Activated naive CD4-positive, alpha-beta T cell treated with anti-CD3 and anti-CD28 coated beads for 36 hours (primary cell): ENCODE measurements at regions of chr19 and their contacts with region 1.

Region 1: GRCh38 chr19:41945135-41945766 is 13.9 kb downstream of the RABAC1 start:
- DNase-seq: peak; percentile 98
- H3K4me3 Mint-ChIP-seq: peak overlapping the region; percentile 48
- H3K27ac Mint-ChIP-seq: peak overlapping the region; percentile 93
- H3K4me1 Mint-ChIP-seq: peaks cover 42% of the 10 kb centered on the region
- H3K27me3 Mint-ChIP-seq: no peaks in the 10 kb centered on the region

Region 2: DNA sequence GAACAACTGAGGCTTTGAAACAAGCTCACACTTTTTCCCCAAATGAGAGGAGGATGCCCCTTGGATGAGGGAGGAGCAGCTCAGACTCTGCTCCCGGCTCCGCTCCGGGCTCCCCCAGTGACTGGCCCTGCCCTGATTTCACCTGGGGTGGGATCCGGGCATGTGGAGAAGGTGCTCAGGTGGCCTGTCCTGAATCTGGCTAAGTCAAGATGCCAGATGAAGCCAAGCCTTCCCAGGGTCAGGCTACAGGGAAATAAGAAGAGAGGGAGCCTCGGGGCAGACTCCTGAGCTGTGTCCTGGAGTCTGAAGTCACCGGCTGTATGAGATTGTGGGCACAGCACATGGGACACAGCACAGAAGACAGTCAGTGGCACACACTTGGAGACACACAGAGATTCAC is 226.5 kb before region 1 on chr19:
- CTCF ChIA-PET with region 1: no interaction called
- intact Hi-C with region 1: no loop called
- DNase-seq: no peak
- H3K4me3 Mint-ChIP-seq: no peak overlapping the region
- H3K27ac Mint-ChIP-seq: no peak overlapping the region
- H3K4me1 Mint-ChIP-seq: no peaks in the 10 kb centered on the region
- H3K27me3 Mint-ChIP-seq: peaks cover 21% of the 10 kb centered on the region

Region 3: DNA sequence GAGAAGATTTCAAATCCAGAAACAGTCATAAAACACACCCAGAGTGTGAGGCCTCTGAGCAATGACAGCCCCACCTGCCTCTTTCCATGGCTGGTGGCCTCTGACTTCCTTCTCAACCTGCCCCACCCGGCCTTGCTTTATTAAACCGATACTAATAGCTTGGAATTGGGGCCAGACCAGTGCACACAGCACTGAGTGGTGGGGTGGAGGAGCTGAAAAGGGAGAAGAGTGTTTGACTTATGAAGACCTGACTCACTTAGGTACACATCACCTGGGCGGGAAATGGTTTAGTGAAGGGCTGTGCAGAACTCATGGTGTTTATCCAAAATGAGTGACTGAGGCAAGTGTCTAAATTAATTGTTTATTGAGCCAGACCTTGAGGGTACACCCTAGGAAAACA is 210.6 kb before region 1 on chr19:
- CTCF ChIA-PET with region 1: no interaction called
- intact Hi-C with region 1: no loop called
- DNase-seq: no peak
- H3K4me3 Mint-ChIP-seq: no peak overlapping the region
- H3K27ac Mint-ChIP-seq: no peak overlapping the region
- H3K4me1 Mint-ChIP-seq: peaks cover 6% of the 10 kb centered on the region
- H3K27me3 Mint-ChIP-seq: peaks cover 27% of the 10 kb centered on the region

Region 4: GRCh38 chr19:41928221-41928683 is 17.0 kb before region 1 on chr19 and contains the start of gene ERFL:
- CTCF ChIA-PET with region 1: interaction called, 5 read pairs
- intact Hi-C with region 1: loop called (anchors 2 kb)
- DNase-seq: peak; percentile 40
- H3K4me3 Mint-ChIP-seq: peak within 1 kb of the TSS; percentile 77
- H3K27ac Mint-ChIP-seq: peak within 1 kb of the TSS; percentile 40
- H3K4me1 Mint-ChIP-seq: peaks cover 21% of the 10 kb centered on the region
- H3K27me3 Mint-ChIP-seq: no peaks in the 10 kb centered on the region
- total RNA-seq, gene ERFL: 0.99 to 1.3 TPM

Region 5: GRCh38 chr19:41959056-41960053 is 14.1 kb after region 1 on chr19 and contains the start of gene RABAC1:
- CTCF ChIA-PET with region 1: interaction called, 6 read pairs
- intact Hi-C with region 1: loop called (anchors 1 kb)
- DNase-seq: peak; percentile 95
- H3K4me3 Mint-ChIP-seq: peak within 1 kb of the TSS; percentile 95
- H3K27ac Mint-ChIP-seq: peak within 1 kb of the TSS; percentile 81
- H3K4me1 Mint-ChIP-seq: peaks cover 13% of the 10 kb centered on the region
- H3K27me3 Mint-ChIP-seq: no peaks in the 10 kb centered on the region
- total RNA-seq, gene RABAC1: 32.8 TPM

Region 6: DNA sequence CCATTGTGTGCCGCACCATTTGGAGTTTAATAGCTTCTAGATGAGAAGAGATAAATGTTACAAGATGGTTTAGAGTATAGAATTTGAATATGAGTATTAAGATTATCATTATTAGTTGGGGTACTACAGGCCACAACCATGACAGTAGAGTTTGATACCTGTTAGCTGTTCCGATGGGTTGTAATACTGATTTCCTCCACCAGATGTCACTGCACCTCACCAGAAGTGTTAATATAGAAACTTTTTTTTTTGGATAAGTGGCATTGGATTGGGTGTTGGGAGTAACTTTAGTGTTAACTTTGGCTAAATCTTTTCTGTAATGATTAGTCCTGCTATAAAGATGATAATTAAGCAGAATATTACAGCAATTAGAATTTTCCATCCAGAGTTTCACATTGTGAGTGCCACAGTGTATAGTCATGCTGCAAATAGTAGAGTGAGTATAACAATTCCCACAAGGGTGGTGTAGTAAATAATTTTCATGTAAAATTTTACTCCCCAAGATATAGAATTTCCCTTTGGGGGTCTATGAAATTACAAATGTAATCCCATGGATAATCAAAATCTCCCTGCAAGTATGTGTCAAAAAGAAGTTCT is 738.8 kb after region 1 on chr19:
- CTCF ChIA-PET with region 1: no interaction called
- intact Hi-C with region 1: no loop called
- DNase-seq: peak; percentile 55
- H3K4me3 Mint-ChIP-seq: no peak overlapping the region
- H3K27ac Mint-ChIP-seq: no peak overlapping the region
- H3K4me1 Mint-ChIP-seq: no peaks in the 10 kb centered on the region
- H3K27me3 Mint-ChIP-seq: peaks cover 5% of the 10 kb centered on the region